Activated naive CD4-positive, alpha-beta T cell treated with anti-CD3 and anti-CD28 coated beads for 36 hours (primary cell): ENCODE measurements at regions of chr22 and their contacts with region 1.

Region 1: GRCh38 chr22:39532215-39533071 is at the start of gene RPS19BP1:
- DNase-seq: peak; percentile 100
- H3K4me3 Mint-ChIP-seq: peak within 1 kb of the TSS; percentile 94
- H3K27ac Mint-ChIP-seq: peak within 1 kb of the TSS; percentile 91
- H3K4me1 Mint-ChIP-seq: peaks cover 49% of the 10 kb centered on the region
- H3K27me3 Mint-ChIP-seq: no peaks in the 10 kb centered on the region
- total RNA-seq, gene RPS19BP1: 52.0 to 56.2 TPM

Region 2: GRCh38 chr22:38901111-38901641 is 631.3 kb before region 1 on chr22:
- CTCF ChIA-PET with region 1: no interaction called
- intact Hi-C with region 1: no loop called
- DNase-seq: no peak
- H3K4me3 Mint-ChIP-seq: no peak overlapping the region
- H3K27ac Mint-ChIP-seq: no peak overlapping the region
- H3K4me1 Mint-ChIP-seq: peaks cover 9% of the 10 kb centered on the region
- H3K27me3 Mint-ChIP-seq: peaks cover 7% of the 10 kb centered on the region

Region 3: GRCh38 chr22:39343259-39344048 is 189.0 kb before region 1 on chr22:
- CTCF ChIA-PET with region 1: interaction called, 3 read pairs
- intact Hi-C with region 1: loop called (anchors 1 kb)
- DNase-seq: peak; percentile 75
- H3K4me3 Mint-ChIP-seq: no peak overlapping the region
- H3K27ac Mint-ChIP-seq: no peak overlapping the region
- H3K4me1 Mint-ChIP-seq: no peaks in the 10 kb centered on the region
- H3K27me3 Mint-ChIP-seq: no peaks in the 10 kb centered on the region

Region 4: GRCh38 chr22:39496131-39496838 is 36.2 kb before region 1 on chr22:
- CTCF ChIA-PET with region 1: interaction called, 208 read pairs
- intact Hi-C with region 1: loop called (anchors 1 kb)
- DNase-seq: peak; percentile 74
- H3K4me3 Mint-ChIP-seq: no peak overlapping the region
- H3K27ac Mint-ChIP-seq: no peak overlapping the region
- H3K4me1 Mint-ChIP-seq: peaks cover 3% of the 10 kb centered on the region
- H3K27me3 Mint-ChIP-seq: no peaks in the 10 kb centered on the region

Region 5: GRCh38 chr22:39520054-39520891 is 12.2 kb before region 1 on chr22 and contains the start of gene ATF4:
- CTCF ChIA-PET with region 1: interaction called, 49 read pairs
- intact Hi-C with region 1: loop called (anchors 1 kb)
- DNase-seq: peak; percentile 98
- H3K4me3 Mint-ChIP-seq: peak within 1 kb of the TSS; percentile 83
- H3K27ac Mint-ChIP-seq: peak within 1 kb of the TSS; percentile 95
- H3K4me1 Mint-ChIP-seq: peaks cover 64% of the 10 kb centered on the region
- H3K27me3 Mint-ChIP-seq: peaks cover 2% of the 10 kb centered on the region
- total RNA-seq, gene ATF4: 589 to 609 TPM

Region 6: DNA sequence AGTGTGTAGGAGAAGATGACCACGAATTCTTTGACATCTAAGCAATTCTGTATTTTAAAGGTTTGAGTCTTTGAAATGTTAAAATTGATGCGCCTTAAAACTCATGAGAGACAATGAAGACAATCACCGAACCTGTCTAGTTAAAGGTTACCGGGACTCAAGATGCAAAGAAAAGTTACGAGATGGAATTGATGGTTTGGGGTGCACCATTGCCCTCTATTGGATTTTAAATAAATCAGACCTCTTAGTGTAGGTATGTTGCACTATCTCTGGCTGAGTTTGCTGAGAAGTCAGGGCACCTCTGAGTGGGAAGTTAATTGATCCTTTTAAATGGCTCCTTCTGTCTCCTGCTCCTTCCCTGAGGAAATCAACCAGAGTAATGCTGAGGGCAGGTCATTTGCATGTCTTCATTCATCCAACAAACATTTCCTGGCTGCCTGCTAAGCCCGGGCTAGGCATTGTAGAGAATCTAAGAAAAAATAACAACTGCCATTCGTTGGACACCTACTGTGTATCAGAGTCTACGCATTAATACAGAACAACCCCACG is 408.4 kb after region 1 on chr22:
- CTCF ChIA-PET with region 1: interaction called, 4 read pairs
- intact Hi-C with region 1: loop called (anchors 2 kb)
- DNase-seq: no peak
- H3K4me3 Mint-ChIP-seq: peak overlapping the region; percentile 33
- H3K27ac Mint-ChIP-seq: peak overlapping the region; percentile 95
- H3K4me1 Mint-ChIP-seq: peaks cover 93% of the 10 kb centered on the region
- H3K27me3 Mint-ChIP-seq: no peaks in the 10 kb centered on the region

Region 7: GRCh38 chr22:40177738-40178416 is 645.4 kb after region 1 on chr22 and contains the start of gene TNRC6B:
- CTCF ChIA-PET with region 1: no interaction called
- intact Hi-C with region 1: loop called (anchors 5 kb)
- DNase-seq: peak; percentile 88
- H3K4me3 Mint-ChIP-seq: peak within 1 kb of the TSS; percentile 69
- H3K27ac Mint-ChIP-seq: peak within 1 kb of the TSS; percentile 97
- H3K4me1 Mint-ChIP-seq: peaks cover 49% of the 10 kb centered on the region
- H3K27me3 Mint-ChIP-seq: no peaks in the 10 kb centered on the region
- total RNA-seq, gene TNRC6B: 37.9 TPM

Region 8: DNA sequence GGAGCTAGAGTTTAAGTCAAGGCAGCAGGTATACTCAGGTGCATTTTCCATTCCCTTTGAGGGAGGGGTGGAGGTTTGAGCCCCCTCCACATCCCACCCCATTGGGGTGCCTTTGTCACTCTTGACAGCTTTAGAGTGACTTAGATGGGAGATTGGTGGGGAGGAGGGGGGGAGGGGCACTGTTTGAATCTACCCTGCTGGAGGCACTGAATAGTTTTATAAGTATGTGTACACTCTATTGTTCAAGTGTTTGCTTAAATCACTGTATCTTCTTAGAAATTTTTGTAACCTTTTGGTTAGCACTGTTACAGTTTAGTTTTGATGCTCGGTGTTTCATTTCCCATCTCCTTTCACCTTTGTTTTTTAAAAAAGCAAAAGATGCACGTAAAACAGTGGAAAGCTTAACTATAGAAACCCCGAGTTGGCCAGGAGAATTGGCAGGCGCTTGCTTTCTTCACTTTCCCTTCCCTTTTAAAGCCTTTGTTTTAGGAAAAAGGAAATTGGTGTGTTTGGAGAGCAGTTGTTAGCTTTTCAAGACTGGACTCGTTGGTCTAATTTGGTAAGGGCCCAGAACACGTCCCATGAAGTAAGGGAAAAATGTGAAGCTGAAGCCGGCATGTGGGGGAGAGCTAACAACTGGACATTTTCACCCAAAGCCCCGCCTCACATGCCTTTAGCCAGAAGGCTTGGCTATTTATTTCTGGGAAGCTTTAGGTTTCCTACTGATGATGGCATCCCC is 688.0 kb after region 1 on chr22:
- CTCF ChIA-PET with region 1: no interaction called
- intact Hi-C with region 1: no loop called
- DNase-seq: no peak
- H3K4me3 Mint-ChIP-seq: no peak overlapping the region
- H3K27ac Mint-ChIP-seq: no peak overlapping the region
- H3K4me1 Mint-ChIP-seq: peaks cover 77% of the 10 kb centered on the region
- H3K27me3 Mint-ChIP-seq: no peaks in the 10 kb centered on the region